Common myeloid progenitor, CD34-positive (primary cell): ENCODE measurements at regions of chr7 and their contacts with region 1.

Region 1: DNA sequence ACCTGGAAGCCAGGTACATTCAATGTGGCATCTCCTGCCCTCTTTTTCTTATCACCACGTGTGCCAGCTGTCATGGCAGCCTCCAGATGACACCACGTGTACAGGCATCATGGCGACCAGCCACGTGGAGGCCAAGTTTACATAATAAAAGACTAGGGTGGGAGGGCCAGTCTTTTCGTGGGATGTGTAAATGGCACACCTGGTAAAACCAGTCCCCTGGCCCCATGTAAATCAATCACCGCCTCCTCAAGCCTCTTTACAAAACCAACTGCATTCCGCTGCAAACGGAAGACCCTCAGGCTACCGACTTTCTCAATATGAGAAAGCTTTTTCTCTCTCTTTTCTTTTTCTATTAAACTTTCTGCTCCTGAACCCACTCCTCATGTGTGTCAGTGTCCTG is 65.1 kb upstream of the PHF14 start:
- DNase-seq: no peak
- H3K4me3 ChIP-seq: no peak overlapping the region
- H3K27ac ChIP-seq: no peak overlapping the region
- H3K4me1 ChIP-seq: no peaks in the 10 kb centered on the region
- H3K27me3 ChIP-seq: no peaks in the 10 kb centered on the region

Region 2: DNA sequence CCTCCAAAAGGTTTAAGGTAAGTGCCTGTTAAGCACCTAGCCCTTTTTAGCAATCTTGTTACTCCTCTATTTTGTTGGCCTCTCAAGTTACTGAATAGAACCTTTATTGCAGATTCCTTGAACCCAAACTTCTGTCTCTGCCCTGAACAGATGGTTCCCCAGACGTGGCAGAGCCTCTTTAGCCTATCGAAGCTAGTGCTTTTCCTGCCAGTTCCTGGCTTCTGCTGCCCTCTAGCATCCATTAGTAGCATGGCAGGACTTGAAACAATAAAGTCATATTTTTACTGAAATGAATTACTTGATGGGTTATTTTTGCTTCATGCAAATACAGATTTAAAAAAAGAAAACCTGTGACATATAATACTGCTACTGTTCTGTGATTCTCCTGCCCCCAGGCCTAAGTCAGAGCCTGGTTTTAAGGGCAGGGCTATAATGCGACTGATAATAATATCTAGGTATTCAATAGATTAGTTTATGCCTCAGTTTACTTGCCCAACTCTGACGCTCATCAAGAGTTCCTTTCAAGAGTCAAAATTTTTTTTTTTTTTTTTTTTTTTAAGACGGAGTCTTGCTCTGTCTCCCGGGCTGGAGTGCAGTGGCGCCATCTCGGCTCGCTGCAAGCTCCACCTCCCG is 19.2 kb before region 1 on chr7:
- CTCF ChIA-PET with region 1: interaction called, 10 read pairs
- POLR2A ChIA-PET with region 1: no interaction called
- DNase-seq: peak; percentile 66 to 84 (median 82)
- H3K4me3 ChIP-seq: peak overlapping the region in 1 of 7 experiments; percentile 45
- H3K27ac ChIP-seq: no peak overlapping the region
- H3K4me1 ChIP-seq: peaks cover 0 to 9% (median 3%) of the 10 kb centered on the region in 4 experiments
- H3K27me3 ChIP-seq: no peaks in the 10 kb centered on the region